ENCODE measurements at regions of chr15 and their contacts with region 1.

Region 1: DNA sequence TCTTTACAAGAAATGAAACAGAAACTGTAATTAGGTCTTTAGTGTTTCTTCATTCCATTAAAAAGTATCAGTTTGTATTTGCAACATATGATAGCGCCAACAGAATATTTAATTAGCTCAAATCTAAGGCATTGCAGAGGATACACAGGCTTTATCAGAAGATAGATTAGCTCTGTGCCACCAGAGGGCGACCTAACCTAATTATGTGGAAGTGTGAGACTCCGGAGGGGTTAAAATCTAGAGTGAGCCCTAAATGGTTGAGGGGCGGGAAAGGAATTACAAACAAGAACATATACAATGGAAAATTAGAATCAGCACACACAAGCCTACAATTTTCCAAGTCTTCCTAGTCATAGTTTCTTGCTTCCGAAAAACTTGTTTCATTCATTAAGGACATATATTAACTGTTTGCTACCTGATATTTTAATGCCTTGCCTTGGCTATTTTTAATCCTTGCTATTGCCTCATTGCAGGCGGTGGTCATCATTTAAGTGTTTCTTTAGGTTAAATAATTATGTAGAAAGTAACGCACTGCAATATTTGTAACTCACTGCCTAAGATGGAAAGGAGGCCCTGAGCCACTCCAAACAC is 18.0 kb upstream of the RYR3 start:
- DNase-seq: peak; percentile 47 to 64 (median 50)
- ATAC-seq: peak; percentile 89
- H3K4me3 ChIP-seq: no peak overlapping the region
- H3K27ac ChIP-seq: no peak overlapping the region
- H3K4me1 ChIP-seq: no peaks in the 10 kb centered on the region
- H3K27me3 ChIP-seq: peaks cover 2 to 7% of the 10 kb centered on the region in 2 experiments; a peak in 2 of 5 replicates
- CTCF ChIP-seq: peak; percentile 64 to 76 (median 68)
- EP300 ChIP-seq: no peak
- POLR2A ChIP-seq: no peak
- RAD21 ChIP-seq: peak; percentile 74 to 81

Region 2: DNA sequence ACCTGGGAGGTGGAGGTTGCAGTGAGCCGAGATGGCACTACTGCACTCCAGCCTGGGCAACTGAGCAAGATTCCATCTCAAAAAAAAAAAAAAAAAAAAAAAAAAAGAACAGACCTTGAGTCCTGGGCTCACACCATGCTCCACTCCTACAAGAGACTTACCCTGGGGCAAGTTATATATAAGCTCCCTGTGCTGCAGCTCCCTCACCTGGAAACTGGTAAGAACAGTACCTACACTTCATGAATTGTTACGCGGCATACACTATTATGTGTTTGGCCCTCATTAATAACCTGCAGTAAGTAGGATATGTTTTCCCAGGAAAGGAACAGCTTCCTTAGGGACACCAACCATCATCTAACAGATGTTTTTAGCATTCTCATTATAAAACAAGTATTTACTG is 217.9 kb before region 1 on chr15:
- CTCF ChIA-PET with region 1: no interaction called
- POLR2A ChIA-PET with region 1: no interaction called
- in situ Hi-C with region 1: no loop called
- intact Hi-C with region 1: no loop called
- DNase-seq: no peak
- ATAC-seq: no peak; the same call in 2 of the 3 replicates
- H3K4me3 ChIP-seq: no peak overlapping the region
- H3K27ac ChIP-seq: no peak overlapping the region
- H3K4me1 ChIP-seq: no peaks in the 10 kb centered on the region
- H3K27me3 ChIP-seq: no peaks in the 10 kb centered on the region; a peak in 1 of 5 replicates
- CTCF ChIP-seq: 0 out of 6 replicates have a peak, but pooled peaks of 1 of the 3 experiments have one; percentile 15
- EP300 ChIP-seq: no peak
- POLR2A ChIP-seq: no peak
- RAD21 ChIP-seq: no peak

Region 3: GRCh38 chr15:33612721-33613304 is 320.0 kb after region 1 on chr15:
- CTCF ChIA-PET with region 1: no interaction called
- POLR2A ChIA-PET with region 1: no interaction called
- in situ Hi-C with region 1: no loop called
- intact Hi-C with region 1: loop called (anchors 10 kb)
- DNase-seq: no peak
- ATAC-seq: no peak
- H3K4me3 ChIP-seq: no peak overlapping the region
- H3K27ac ChIP-seq: no peak overlapping the region
- H3K4me1 ChIP-seq: no peaks in the 10 kb centered on the region
- H3K27me3 ChIP-seq: no peaks in the 10 kb centered on the region
- CTCF ChIP-seq: no peak
- EP300 ChIP-seq: no peak
- POLR2A ChIP-seq: no peak
- RAD21 ChIP-seq: no peak